ENCODE measurements at regions of chr14 and their contacts with region 1.

Region 1: GRCh38 chr14:68824517-68825347 is 31.9 kb upstream of the ZFP36L1 start:
- DNase-seq: no peak
- H3K4me3 ChIP-seq: no peak overlapping the region
- H3K27ac ChIP-seq: no peak overlapping the region
- H3K4me1 ChIP-seq: peaks cover 9% of the 10 kb centered on the region
- H3K27me3 ChIP-seq: no peaks in the 10 kb centered on the region
- CTCF ChIP-seq: peak; percentile 85 to 97

Region 2: GRCh38 chr14:68284333-68284732 is 540.4 kb before region 1 on chr14:
- CTCF ChIA-PET with region 1: interaction called, 11 read pairs
- dilution Hi-C with region 1: no loop called
- in situ Hi-C with region 1: no loop called
- intact Hi-C with region 1: no loop called
- DNase-seq: no peak
- H3K4me3 ChIP-seq: no peak overlapping the region
- H3K27ac ChIP-seq: no peak overlapping the region
- H3K4me1 ChIP-seq: no peaks in the 10 kb centered on the region
- H3K27me3 ChIP-seq: no peaks in the 10 kb centered on the region
- CTCF ChIP-seq: no peak

Region 3: GRCh38 chr14:68762953-68763764 is 61.6 kb before region 1 on chr14:
- CTCF ChIA-PET with region 1: no interaction called
- dilution Hi-C with region 1: no loop called
- in situ Hi-C with region 1: no loop called
- intact Hi-C with region 1: no loop called
- DNase-seq: peak; percentile 34
- H3K4me3 ChIP-seq: no peak overlapping the region
- H3K27ac ChIP-seq: no peak overlapping the region
- H3K4me1 ChIP-seq: peaks cover 4% of the 10 kb centered on the region
- H3K27me3 ChIP-seq: no peaks in the 10 kb centered on the region
- CTCF ChIP-seq: no peak

Region 4: DNA sequence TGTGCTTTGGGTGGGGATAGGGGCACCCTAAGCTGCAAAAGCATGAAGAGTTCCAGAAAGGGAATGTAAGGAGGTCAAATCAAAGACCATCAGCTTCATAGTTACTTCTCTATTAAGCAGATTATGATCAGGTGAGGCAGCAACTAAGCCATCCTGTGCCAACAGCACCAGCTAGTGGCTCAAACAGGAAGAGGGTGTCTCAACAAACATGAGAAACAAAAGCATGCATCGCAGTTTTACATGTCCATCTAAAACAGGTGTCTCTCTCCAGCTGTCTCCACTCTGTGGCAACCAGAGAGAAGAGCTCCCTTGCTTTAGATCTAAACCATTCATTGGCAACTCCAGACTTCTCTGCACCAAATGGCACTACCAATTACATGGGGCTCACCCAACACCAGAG is 101.5 kb after region 1 on chr14:
- CTCF ChIA-PET with region 1: no interaction called
- dilution Hi-C with region 1: no loop called
- in situ Hi-C with region 1: no loop called
- intact Hi-C with region 1: no loop called
- DNase-seq: no peak
- H3K4me3 ChIP-seq: no peak overlapping the region
- H3K27ac ChIP-seq: no peak overlapping the region
- H3K4me1 ChIP-seq: peaks cover 41% of the 10 kb centered on the region
- H3K27me3 ChIP-seq: no peaks in the 10 kb centered on the region
- CTCF ChIP-seq: peak; percentile 64 to 78

Measured in mammary epithelial cell (primary cell).